MCF 10A (cell line): ENCODE measurements at regions of chr7 and their contacts with region 1.

Region 1: DNA sequence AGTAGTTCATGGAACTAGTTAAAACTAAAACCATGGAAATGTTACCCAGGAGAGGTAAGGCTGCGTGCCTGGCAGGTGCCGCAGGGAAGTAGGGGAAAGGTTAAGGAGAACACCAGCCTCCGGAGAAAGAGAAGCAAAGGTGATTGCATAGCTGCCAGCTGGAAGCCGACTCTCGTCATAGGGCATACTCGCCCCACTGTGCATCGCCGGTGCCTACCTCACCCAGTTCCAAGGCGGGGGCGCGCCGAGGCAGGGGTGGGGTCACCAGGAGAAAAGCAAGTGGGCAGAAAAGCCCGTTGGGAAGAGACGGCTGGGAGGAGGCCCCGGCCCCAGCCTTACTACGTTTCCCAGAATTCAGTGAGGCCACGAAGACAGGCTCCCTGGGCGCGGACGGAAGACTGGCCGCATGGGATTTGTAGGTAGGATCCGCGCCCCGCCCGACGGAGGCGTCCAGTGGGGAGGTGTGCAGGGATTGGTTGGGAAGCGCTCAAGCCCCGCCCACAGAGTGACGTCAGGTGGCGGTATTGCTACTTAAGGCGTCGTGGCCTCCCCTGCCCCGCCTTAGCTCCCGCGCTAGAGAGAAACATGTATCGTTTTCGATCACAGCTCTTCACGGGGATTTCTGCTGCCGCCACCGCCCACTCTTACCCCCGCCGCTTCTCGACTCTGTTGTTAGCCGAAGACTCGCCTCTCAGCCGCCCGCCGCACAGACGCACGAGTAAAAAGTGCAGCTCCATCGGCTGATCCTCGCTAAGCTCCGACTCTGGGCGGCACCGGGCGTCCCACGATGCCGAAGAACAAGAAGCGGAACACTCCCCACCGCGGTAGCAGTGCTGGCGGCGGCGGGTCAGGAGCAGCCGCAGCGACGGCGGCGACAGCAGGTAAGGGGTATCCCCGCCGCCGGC is at the start of gene IFRD1:
- DNase-seq: peak; percentile 99
- H3K4me3 Mint-ChIP-seq: peak within 1 kb of the TSS; percentile 97
- H3K27ac Mint-ChIP-seq: peak within 1 kb of the TSS; percentile 97
- H3K4me1 Mint-ChIP-seq: peaks cover 26% of the 10 kb centered on the region
- H3K27me3 Mint-ChIP-seq: no peaks in the 10 kb centered on the region
- CTCF ChIP-seq: no peak
- total RNA-seq, gene IFRD1: 116 and 123 TPM in 2 replicates

Region 2: GRCh38 chr7:111018960-111019736 is 1431.0 kb before region 1 on chr7:
- CTCF ChIA-PET with region 1: no interaction called
- POLR2A ChIA-PET with region 1: no interaction called
- intact Hi-C with region 1: no loop called
- DNase-seq: no peak
- H3K4me3 Mint-ChIP-seq: no peak overlapping the region
- H3K27ac Mint-ChIP-seq: no peak overlapping the region
- H3K4me1 Mint-ChIP-seq: peaks cover 6% of the 10 kb centered on the region
- H3K27me3 Mint-ChIP-seq: no peaks in the 10 kb centered on the region
- CTCF ChIP-seq: no peak

Region 3: GRCh38 chr7:112206238-112207044 is 243.7 kb before region 1 on chr7 and contains the starts of genes DOCK4 and ZNF277:
- CTCF ChIA-PET with region 1: interaction called, 7 read pairs
- POLR2A ChIA-PET with region 1: interaction called, 126 read pairs
- intact Hi-C with region 1: loop called (anchors 2 kb)
- DNase-seq: peak; percentile 100
- H3K4me3 Mint-ChIP-seq: peak within 1 kb of the TSS; percentile 91
- H3K27ac Mint-ChIP-seq: peak within 1 kb of the TSS; percentile 95
- H3K4me1 Mint-ChIP-seq: peaks cover 25% of the 10 kb centered on the region
- H3K27me3 Mint-ChIP-seq: no peaks in the 10 kb centered on the region
- CTCF ChIP-seq: no peak
- total RNA-seq, gene DOCK4: 28.0 and 31.4 TPM in 2 replicates
- total RNA-seq, gene ZNF277: 17.1 and 19.9 TPM in 2 replicates

Region 4: GRCh38 chr7:112427984-112428383 is 22.2 kb before region 1 on chr7:
- CTCF ChIA-PET with region 1: interaction called, 14 read pairs
- POLR2A ChIA-PET with region 1: interaction called, 255 read pairs
- intact Hi-C with region 1: loop called (anchors 2 kb)
- DNase-seq: no peak
- H3K4me3 Mint-ChIP-seq: no peak overlapping the region
- H3K27ac Mint-ChIP-seq: no peak overlapping the region
- H3K4me1 Mint-ChIP-seq: peaks cover 11% of the 10 kb centered on the region
- H3K27me3 Mint-ChIP-seq: no peaks in the 10 kb centered on the region
- CTCF ChIP-seq: no peak

Region 5: GRCh38 chr7:112467867-112468266 is 17.7 kb after region 1 on chr7:
- CTCF ChIA-PET with region 1: interaction called, 54 read pairs
- POLR2A ChIA-PET with region 1: interaction called, 152 read pairs
- intact Hi-C with region 1: no loop called
- DNase-seq: no peak
- H3K4me3 Mint-ChIP-seq: no peak overlapping the region
- H3K27ac Mint-ChIP-seq: no peak overlapping the region
- H3K4me1 Mint-ChIP-seq: peaks cover under 1% of the 10 kb centered on the region
- H3K27me3 Mint-ChIP-seq: no peaks in the 10 kb centered on the region
- CTCF ChIP-seq: no peak

Region 6: DNA sequence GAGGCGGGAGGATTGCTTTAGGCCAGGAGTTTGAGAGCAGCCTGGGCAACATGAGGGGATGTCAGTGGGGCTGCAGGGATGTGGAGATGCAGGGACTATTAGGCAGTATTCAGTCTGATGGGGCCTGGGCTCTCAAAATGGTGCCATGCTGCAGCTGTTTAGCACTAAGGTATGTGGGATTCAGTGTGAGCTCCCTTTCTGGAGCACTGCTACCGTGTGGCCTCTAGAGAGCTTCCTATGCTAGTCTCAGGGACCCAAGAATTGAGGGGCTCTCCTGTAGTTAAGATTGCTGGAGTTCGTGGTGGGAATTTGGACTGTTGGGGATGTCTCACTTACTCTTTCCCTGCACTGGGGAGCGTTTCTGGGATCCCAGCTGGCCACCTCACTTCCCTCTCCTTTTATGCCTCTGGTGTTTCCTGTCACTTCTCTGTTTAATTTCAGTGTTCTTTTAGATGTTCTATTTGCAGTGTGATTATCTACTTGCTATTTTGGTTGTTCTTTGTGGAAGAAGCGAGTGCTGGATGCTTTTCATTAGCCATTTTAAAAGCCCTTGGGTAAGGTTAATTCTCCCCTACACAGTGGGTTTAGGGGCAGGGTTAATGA is 54.0 kb after region 1 on chr7:
- CTCF ChIA-PET with region 1: no interaction called
- POLR2A ChIA-PET with region 1: no interaction called
- intact Hi-C with region 1: no loop called
- DNase-seq: no peak
- H3K4me3 Mint-ChIP-seq: no peak overlapping the region
- H3K27ac Mint-ChIP-seq: no peak overlapping the region
- H3K4me1 Mint-ChIP-seq: no peaks in the 10 kb centered on the region
- H3K27me3 Mint-ChIP-seq: no peaks in the 10 kb centered on the region
- CTCF ChIP-seq: no peak

Region 7: DNA sequence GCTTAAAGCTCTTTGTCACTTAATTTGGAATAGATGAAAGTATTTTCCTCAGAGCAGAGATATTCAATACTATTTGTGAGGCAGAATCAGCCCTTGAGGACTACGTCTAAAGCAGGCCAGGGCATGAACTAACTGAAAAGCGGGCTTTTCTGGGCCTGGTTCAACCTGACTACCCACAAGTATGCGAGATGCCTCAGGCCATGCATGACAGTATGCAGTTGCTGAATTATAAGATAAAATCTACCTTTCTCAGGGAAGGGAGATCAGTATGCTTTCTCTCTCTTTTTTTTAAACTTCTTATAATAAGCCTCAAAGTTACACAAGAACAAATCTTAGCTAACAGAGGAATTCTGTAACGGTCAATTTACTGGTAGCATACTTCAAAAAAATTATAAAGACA is 319.9 kb after region 1 on chr7:
- CTCF ChIA-PET with region 1: no interaction called
- POLR2A ChIA-PET with region 1: interaction called, 16 read pairs
- intact Hi-C with region 1: no loop called
- DNase-seq: peak; percentile 87
- H3K4me3 Mint-ChIP-seq: no peak overlapping the region
- H3K27ac Mint-ChIP-seq: peak overlapping the region; percentile 82
- H3K4me1 Mint-ChIP-seq: peaks cover 11% of the 10 kb centered on the region
- H3K27me3 Mint-ChIP-seq: no peaks in the 10 kb centered on the region
- CTCF ChIP-seq: no peak